Endothelial cell of umbilical vein (primary cell): ENCODE measurements at regions of chr14 and their contacts with region 1.

Region 1: GRCh38 chr14:61694830-61695694 is at the start of gene HIF1A:
- DNase-seq: peak; percentile 99
- H3K4me3 ChIP-seq: peak within 1 kb of the TSS; percentile 88 to 100 (median 99)
- H3K27ac ChIP-seq: peak within 1 kb of the TSS; percentile 84
- H3K4me1 ChIP-seq: peaks cover 30% of the 10 kb centered on the region
- H3K27me3 ChIP-seq: no peaks in the 10 kb centered on the region
- CTCF ChIP-seq: peak in 1 of 2 donors; percentile 12
- POLR2A ChIP-seq: peak; percentile 97
- total RNA-seq, gene HIF1A: 179 and 180 TPM in 2 replicates

Region 2: GRCh38 chr14:61103481-61104339 is 591.4 kb before region 1 on chr14:
- CTCF ChIA-PET with region 1: no interaction called
- POLR2A ChIA-PET with region 1: no interaction called
- dilution Hi-C with region 1: no loop called
- intact Hi-C with region 1: loop called (anchors 1 kb)
- DNase-seq: peak; percentile 94
- H3K4me3 ChIP-seq: peak overlapping the region in 1 of 3 experiments; percentile 17
- H3K27ac ChIP-seq: peak overlapping the region; percentile 100
- H3K4me1 ChIP-seq: peaks cover 66% of the 10 kb centered on the region
- H3K27me3 ChIP-seq: no peaks in the 10 kb centered on the region
- CTCF ChIP-seq: no peak
- POLR2A ChIP-seq: peak; percentile 52

Region 3: DNA sequence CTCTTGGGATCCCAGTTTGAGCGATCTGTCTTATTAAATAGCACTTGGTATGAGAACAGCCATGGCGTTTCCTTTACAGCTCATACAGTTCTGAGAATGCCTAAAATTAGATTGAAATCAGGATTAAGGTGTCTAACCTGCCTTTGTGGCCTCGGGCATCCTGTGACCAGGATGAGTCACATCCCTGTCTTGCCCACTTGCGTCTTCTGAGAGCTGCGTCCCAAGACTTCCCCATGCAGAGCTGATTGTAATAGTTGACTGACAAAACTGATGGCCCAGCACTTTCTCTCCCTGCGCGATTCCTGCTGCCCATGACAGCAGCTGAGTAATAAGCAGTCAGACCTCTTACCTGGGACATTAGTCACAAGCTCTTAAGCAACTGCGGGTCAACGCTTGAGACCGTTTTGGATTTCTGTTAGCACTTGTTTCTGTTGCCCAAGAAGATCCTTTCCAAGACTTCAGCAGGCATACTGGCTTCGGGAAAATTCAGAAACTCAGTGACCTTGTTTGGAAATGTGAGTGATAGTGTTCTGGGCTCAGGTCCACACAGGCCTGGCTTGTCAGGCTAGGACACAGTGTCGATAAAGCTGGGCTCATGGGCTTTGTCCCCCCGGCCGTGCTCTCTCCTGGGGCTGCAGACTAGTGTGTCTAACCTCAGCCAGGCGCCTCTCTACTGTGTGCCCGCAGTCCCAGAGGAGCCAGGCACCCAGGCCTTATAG is 169.6 kb before region 1 on chr14:
- CTCF ChIA-PET with region 1: no interaction called
- POLR2A ChIA-PET with region 1: no interaction called
- dilution Hi-C with region 1: no loop called
- intact Hi-C with region 1: loop called (anchors 1 kb)
- DNase-seq: peak; percentile 88
- H3K4me3 ChIP-seq: peak overlapping the region in 1 of 3 experiments; percentile 6
- H3K27ac ChIP-seq: peak overlapping the region; percentile 89
- H3K4me1 ChIP-seq: peaks cover 55% of the 10 kb centered on the region
- H3K27me3 ChIP-seq: no peaks in the 10 kb centered on the region
- CTCF ChIP-seq: no peak
- POLR2A ChIP-seq: no peak

Region 4: GRCh38 chr14:61653507-61653906 is 41.6 kb before region 1 on chr14:
- CTCF ChIA-PET with region 1: interaction called, 6 read pairs
- POLR2A ChIA-PET with region 1: no interaction called
- dilution Hi-C with region 1: no loop called
- intact Hi-C with region 1: loop called (anchors 1 kb)
- DNase-seq: peak; percentile 92
- H3K4me3 ChIP-seq: no peak overlapping the region
- H3K27ac ChIP-seq: peak overlapping the region; percentile 14
- H3K4me1 ChIP-seq: peaks cover 19% of the 10 kb centered on the region
- H3K27me3 ChIP-seq: no peaks in the 10 kb centered on the region
- CTCF ChIP-seq: no peak
- POLR2A ChIP-seq: no peak

Region 5: DNA sequence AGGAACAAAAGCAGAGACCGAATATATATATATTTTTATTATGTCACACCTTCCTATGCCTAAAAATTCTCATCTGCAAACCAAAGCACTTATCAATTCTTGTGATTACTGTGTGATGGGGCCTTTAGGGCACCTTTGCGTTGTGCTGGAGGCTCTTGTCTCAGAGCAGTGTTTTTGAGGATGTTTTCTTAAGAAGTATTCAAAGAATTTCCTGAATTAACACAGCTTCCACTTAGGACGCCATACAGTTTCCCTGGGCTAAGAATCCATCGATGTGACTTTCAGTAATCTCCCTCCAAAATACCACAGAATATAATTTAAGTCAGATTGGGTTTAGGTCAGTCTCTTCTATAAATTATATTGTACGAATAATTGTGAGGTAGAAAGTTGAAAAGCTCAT is 21.8 kb before region 1 on chr14:
- CTCF ChIA-PET with region 1: interaction called, 4 read pairs
- POLR2A ChIA-PET with region 1: no interaction called
- dilution Hi-C with region 1: no loop called
- intact Hi-C with region 1: loop called (anchors 1 kb)
- DNase-seq: peak; percentile 58
- H3K4me3 ChIP-seq: no peak overlapping the region
- H3K27ac ChIP-seq: peak overlapping the region; percentile 15
- H3K4me1 ChIP-seq: peaks cover 39% of the 10 kb centered on the region
- H3K27me3 ChIP-seq: no peaks in the 10 kb centered on the region
- CTCF ChIP-seq: no peak
- POLR2A ChIP-seq: no peak

Region 6: GRCh38 chr14:61761959-61762786 is 67.1 kb after region 1 on chr14 and contains the start of gene SNAPC1:
- CTCF ChIA-PET with region 1: no interaction called
- POLR2A ChIA-PET with region 1: interaction called, 3 read pairs
- dilution Hi-C with region 1: no loop called
- intact Hi-C with region 1: loop called (anchors 2 kb)
- DNase-seq: peak; percentile 98
- H3K4me3 ChIP-seq: peak within 1 kb of the TSS; percentile 63 to 86 (median 83)
- H3K27ac ChIP-seq: peak within 1 kb of the TSS; percentile 66
- H3K4me1 ChIP-seq: peaks cover 29% of the 10 kb centered on the region
- H3K27me3 ChIP-seq: no peaks in the 10 kb centered on the region
- CTCF ChIP-seq: no peak
- POLR2A ChIP-seq: peak; percentile 89
- total RNA-seq, gene SNAPC1: 12.7 and 21.8 TPM in 2 replicates